A673 (cell line): ENCODE measurements at regions of chr19 and their contacts with region 1.

Region 1: GRCh38 chr19:6906559-6907060 is 19.2 kb downstream of the ADGRE1 start:
- DNase-seq: no peak
- H3K4me3 ChIP-seq: no peak overlapping the region
- H3K27ac ChIP-seq: no peak overlapping the region
- H3K4me1 ChIP-seq: no peaks in the 10 kb centered on the region
- H3K27me3 ChIP-seq: no peaks in the 10 kb centered on the region
- CTCF ChIP-seq: no peak

Region 2: DNA sequence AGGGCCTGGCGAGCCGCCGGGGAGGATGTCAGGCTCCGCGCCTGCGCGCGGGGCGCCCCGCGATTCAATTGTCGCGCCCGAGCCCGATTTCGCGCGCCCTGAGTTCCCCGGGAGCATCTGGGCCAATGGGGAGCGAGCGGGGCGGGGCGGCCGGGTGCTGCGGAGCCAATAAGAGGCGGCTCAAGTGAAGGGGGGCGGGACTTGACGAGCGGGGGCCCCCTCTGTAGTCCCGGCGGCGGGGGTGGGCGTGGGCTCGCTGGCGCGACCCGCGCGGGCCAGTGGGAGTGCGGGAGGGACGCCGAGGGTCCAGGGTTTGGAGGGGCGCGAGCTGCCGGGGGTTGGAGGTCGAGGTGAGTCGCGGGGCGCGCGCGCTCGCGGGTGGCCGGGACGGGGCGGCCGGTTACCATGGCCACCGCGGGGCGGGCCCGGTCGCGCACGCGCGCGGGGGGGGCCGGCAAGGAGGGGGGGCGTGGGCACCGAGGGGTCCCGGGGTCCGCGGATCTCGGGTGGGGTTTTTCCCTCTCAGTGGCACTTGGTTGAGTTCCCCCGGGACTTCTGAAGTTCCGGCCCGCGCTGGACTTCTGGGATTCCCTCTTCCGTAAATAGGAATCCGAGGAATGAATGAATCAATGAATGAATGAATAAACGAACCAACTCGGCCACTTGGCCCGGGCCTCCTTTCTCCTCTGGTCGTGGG is 1996.6 kb before region 1 on chr19:
- CTCF ChIA-PET with region 1: no interaction called
- POLR2A ChIA-PET with region 1: no interaction called
- intact Hi-C with region 1: no loop called
- DNase-seq: peak; percentile 99
- H3K4me3 ChIP-seq: peak overlapping the region; percentile 62
- H3K27ac ChIP-seq: peak overlapping the region; percentile 91
- H3K4me1 ChIP-seq: peaks cover 34% of the 10 kb centered on the region
- H3K27me3 ChIP-seq: no peaks in the 10 kb centered on the region
- CTCF ChIP-seq: no peak

Region 3: GRCh38 chr19:6718741-6719539 is 187.7 kb before region 1 on chr19:
- CTCF ChIA-PET with region 1: no interaction called
- POLR2A ChIA-PET with region 1: no interaction called
- intact Hi-C with region 1: no loop called
- DNase-seq: peak; percentile 58
- H3K4me3 ChIP-seq: no peak overlapping the region
- H3K27ac ChIP-seq: no peak overlapping the region
- H3K4me1 ChIP-seq: peaks cover 4% of the 10 kb centered on the region
- H3K27me3 ChIP-seq: no peaks in the 10 kb centered on the region
- CTCF ChIP-seq: no peak

Region 4: GRCh38 chr19:7083076-7083956 is 176.7 kb after region 1 on chr19:
- CTCF ChIA-PET with region 1: interaction called, 10 read pairs
- POLR2A ChIA-PET with region 1: no interaction called
- intact Hi-C with region 1: no loop called
- DNase-seq: no peak
- H3K4me3 ChIP-seq: no peak overlapping the region
- H3K27ac ChIP-seq: no peak overlapping the region
- H3K4me1 ChIP-seq: no peaks in the 10 kb centered on the region
- H3K27me3 ChIP-seq: no peaks in the 10 kb centered on the region
- CTCF ChIP-seq: no peak